ENCODE measurements at regions of chr2 and their contacts with region 1.

Region 1: GRCh38 chr2:190343500-190344275 is at the start of gene INPP1:
- DNase-seq: no peak
- ATAC-seq: peak; percentile 83
- H3K4me3 ChIP-seq: peak within 1 kb of the TSS; percentile 77
- H3K27ac ChIP-seq: peak within 1 kb of the TSS; percentile 44; the same call in 1 of the 2 replicates
- H3K4me1 ChIP-seq: peaks cover 8% of the 10 kb centered on the region; the same call in 1 of the 2 replicates
- H3K27me3 ChIP-seq: no peaks in the 10 kb centered on the region
- CTCF ChIP-seq: no peak
- EP300 ChIP-seq: 0 out of 4 replicates have a peak, but pooled peaks of 1 of the 2 experiments have one; percentile 17
- POLR2A ChIP-seq: peak; percentile 53
- RAD21 ChIP-seq: no peak
- polyA plus RNA-seq, gene INPP1: 3.3 to 8.9 TPM

Region 2: DNA sequence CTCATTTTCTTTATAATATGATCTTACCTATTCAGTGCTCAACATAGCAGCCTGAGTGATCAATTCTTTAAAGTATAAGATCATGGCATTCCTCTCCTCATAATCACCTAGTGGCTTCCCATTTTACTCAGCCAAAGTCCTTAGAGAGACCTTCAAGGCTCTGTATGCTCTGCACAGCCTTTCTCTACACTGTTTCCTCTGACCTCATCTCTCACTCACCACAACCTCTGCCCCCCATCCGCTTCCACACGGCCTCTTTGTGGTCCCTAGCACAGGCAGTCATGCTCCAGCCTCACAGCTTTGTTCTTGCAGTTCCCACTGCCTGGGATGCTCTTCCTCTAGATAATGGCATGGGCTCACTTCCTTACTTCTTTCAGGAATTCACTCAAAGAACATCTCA is 133.2 kb before region 1 on chr2:
- CTCF ChIA-PET with region 1: no interaction called
- POLR2A ChIA-PET with region 1: no interaction called
- RAD21 ChIA-PET with region 1: no interaction called
- SMC1A ChIA-PET with region 1: no interaction called
- in situ Hi-C with region 1: no loop called
- intact Hi-C with region 1: no loop called
- DNase-seq: no peak
- ATAC-seq: no peak
- H3K4me3 ChIP-seq: no peak overlapping the region
- H3K27ac ChIP-seq: no peak overlapping the region
- H3K4me1 ChIP-seq: no peaks in the 10 kb centered on the region
- H3K27me3 ChIP-seq: no peaks in the 10 kb centered on the region
- CTCF ChIP-seq: no peak
- EP300 ChIP-seq: no peak
- POLR2A ChIP-seq: no peak
- RAD21 ChIP-seq: no peak

Region 3: DNA sequence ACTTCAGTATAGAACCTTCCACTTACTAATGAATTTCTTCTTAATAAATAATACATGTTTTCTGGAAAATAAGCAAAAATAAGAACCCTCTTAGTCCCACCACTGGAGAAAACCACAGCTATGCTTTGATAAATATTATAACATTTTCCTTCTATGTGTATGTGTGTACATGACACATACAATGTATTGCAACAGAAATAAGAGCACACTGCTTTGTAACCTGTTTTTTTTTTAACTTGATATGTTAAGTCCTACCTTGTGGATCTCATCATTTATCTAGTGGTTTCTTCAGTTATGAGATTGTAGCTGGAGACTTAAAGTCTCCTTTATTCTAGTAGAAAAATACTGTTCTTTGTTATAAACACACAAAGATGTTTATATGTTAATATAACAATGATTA is 16.9 kb after region 1 on chr2:
- CTCF ChIA-PET with region 1: interaction called, 48 read pairs
- POLR2A ChIA-PET with region 1: interaction called, 15 read pairs
- RAD21 ChIA-PET with region 1: interaction called, 36 read pairs
- SMC1A ChIA-PET with region 1: interaction called, 46 read pairs
- in situ Hi-C with region 1: no loop called
- intact Hi-C with region 1: no loop called
- DNase-seq: no peak
- ATAC-seq: no peak
- H3K4me3 ChIP-seq: no peak overlapping the region
- H3K27ac ChIP-seq: no peak overlapping the region
- H3K4me1 ChIP-seq: peaks cover 8% of the 10 kb centered on the region
- H3K27me3 ChIP-seq: no peaks in the 10 kb centered on the region
- CTCF ChIP-seq: no peak
- EP300 ChIP-seq: no peak
- POLR2A ChIP-seq: no peak
- RAD21 ChIP-seq: no peak

Region 4: GRCh38 chr2:190365499-190366204 is 22.0 kb after region 1 on chr2:
- CTCF ChIA-PET with region 1: interaction called, 48 read pairs
- POLR2A ChIA-PET with region 1: interaction called, 15 read pairs
- RAD21 ChIA-PET with region 1: interaction called, 36 read pairs
- SMC1A ChIA-PET with region 1: interaction called, 44 read pairs
- in situ Hi-C with region 1: no loop called
- intact Hi-C with region 1: no loop called
- DNase-seq: no peak
- ATAC-seq: no peak
- H3K4me3 ChIP-seq: no peak overlapping the region
- H3K27ac ChIP-seq: no peak overlapping the region
- H3K4me1 ChIP-seq: no peaks in the 10 kb centered on the region
- H3K27me3 ChIP-seq: no peaks in the 10 kb centered on the region
- CTCF ChIP-seq: no peak
- EP300 ChIP-seq: no peak
- POLR2A ChIP-seq: no peak
- RAD21 ChIP-seq: no peak

Region 5: DNA sequence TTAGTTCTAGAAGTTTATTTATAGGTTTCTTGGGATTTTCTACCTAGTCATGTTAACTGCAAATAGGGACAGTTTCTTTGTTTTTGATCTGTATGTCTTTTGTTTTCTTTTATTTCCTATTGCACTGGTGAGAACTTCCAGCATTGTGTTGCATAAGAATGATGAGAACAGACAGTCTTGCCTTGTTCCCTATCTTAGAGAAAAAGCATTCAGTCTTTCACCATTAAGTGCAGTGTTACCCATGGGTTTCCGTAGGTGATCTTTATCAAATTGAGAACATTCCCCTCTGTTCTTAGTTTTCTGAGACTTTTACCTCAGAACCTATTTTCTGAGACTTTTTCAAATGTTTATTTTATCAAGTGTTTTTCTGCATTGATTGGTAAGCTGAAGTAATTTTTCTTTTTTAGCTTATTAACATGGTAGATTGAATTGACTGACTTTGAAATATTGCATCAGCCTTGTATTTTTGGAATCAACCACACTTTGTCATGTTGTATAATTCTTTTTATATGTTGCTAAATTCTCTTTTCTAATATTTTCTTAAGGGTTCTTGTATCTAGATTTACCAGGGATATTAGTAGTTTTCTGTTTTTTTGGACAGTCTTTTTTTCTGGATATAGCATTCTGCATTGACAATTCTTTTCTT is 81.7 kb after region 1 on chr2:
- CTCF ChIA-PET with region 1: no interaction called
- POLR2A ChIA-PET with region 1: no interaction called
- RAD21 ChIA-PET with region 1: no interaction called
- SMC1A ChIA-PET with region 1: no interaction called
- in situ Hi-C with region 1: no loop called
- intact Hi-C with region 1: no loop called
- DNase-seq: no peak
- ATAC-seq: no peak
- H3K4me3 ChIP-seq: no peak overlapping the region
- H3K27ac ChIP-seq: no peak overlapping the region
- H3K4me1 ChIP-seq: peaks cover 6% of the 10 kb centered on the region
- H3K27me3 ChIP-seq: no peaks in the 10 kb centered on the region
- CTCF ChIP-seq: no peak
- EP300 ChIP-seq: no peak
- POLR2A ChIP-seq: no peak
- RAD21 ChIP-seq: no peak

Measured in GM12878 (cell line).